Adrenal gland (tissue), 19 donors: ENCODE measurements at regions of chr19 and their contacts with region 1.

Region 1: DNA sequence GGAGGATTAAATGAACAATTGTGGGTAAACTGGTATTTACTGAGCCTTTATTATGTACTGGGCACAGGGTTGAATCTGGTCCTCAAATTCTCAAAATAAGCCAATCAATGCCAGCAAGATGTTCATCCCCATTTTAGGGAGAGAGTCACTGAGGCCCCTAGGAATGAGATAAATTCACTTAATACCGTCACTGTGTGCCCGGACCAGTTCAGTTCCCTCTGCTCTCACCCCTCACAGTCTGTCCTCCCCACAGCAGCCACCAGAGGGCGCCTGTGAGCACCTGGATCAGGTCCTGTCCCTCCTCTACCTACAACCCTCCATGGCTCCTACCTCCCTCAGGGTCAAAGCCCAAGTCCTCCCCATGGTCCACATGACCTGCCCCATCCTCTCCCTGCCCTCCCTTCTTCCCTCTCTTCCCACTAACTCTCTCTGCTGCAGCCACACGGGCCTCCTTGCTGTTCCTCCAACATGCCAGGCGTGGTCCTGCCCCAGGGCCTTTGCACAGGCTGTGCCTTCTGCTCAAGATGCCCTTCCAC is 42.0 kb upstream of the NFIC start:
- DNase-seq: peak; percentile 50 to 85 (median 67)
- H3K4me3 ChIP-seq: no peak overlapping the region
- H3K27ac ChIP-seq: no peak overlapping the region
- H3K4me1 ChIP-seq: no peaks in the 10 kb centered on the region
- H3K27me3 ChIP-seq: no peaks in the 10 kb centered on the region
- CTCF ChIP-seq: peak; percentile 55 to 78 (median 67)
- POLR2A ChIP-seq: no peak

Region 2: GRCh38 chr19:3360421-3361383 is 36.3 kb after region 1 on chr19:
- intact Hi-C with region 1: no loop called
- DNase-seq: peak; percentile 66 to 84 (median 76)
- H3K4me3 ChIP-seq: peak overlapping the region in 3 of 4 donors; percentile 53 to 99 (median 65)
- H3K27ac ChIP-seq: peak overlapping the region; percentile 50 to 99 (median 87)
- H3K4me1 ChIP-seq: peaks cover 28 to 44% of the 10 kb centered on the region in 2 donors
- H3K27me3 ChIP-seq: no peaks in the 10 kb centered on the region
- CTCF ChIP-seq: peak in 2 of 6 experiments; percentile 6 to 13
- POLR2A ChIP-seq: peak; percentile 11 to 59

Region 3: DNA sequence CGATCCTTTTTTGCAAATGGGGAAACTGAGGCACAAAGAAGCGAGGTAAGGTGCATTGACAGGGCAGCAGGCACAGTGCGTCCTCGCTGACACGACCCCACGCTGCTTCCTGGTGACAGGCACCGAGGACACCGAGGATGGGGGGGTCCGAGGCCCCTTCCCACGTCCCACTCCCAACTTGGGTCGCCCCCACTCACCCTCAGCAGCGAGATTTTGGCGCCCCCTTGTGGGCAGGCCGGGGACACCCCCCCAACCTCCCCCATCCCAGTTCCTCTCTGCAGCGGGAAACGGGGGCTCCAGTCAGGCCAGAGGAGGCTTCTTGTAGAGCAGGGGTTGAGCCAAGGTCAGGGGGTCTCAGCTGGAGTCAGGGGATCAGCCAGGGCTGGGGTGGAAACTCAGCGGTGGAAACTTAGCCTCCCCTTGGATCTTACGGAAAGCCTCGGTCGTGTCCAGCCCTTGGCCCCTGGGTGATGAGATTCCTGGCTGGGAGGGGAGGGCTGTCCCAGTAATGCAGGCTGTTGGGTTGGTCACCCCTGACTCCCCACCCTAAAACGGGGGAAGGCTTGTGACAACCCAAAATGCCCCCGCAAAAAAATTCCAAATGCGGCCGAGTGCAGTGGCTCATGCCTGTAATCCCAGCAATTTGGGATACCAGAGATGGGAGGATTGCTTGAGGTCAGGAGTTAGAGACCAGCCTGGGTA is 147.7 kb after region 1 on chr19:
- intact Hi-C with region 1: loop called (anchors 2 to 5 kb)
- DNase-seq: peak in 2 of 7 donors; percentile 60 to 62
- H3K4me3 ChIP-seq: no peak overlapping the region
- H3K27ac ChIP-seq: no peak overlapping the region
- H3K4me1 ChIP-seq: peaks cover 0 to 7% of the 10 kb centered on the region in 2 donors
- H3K27me3 ChIP-seq: no peaks in the 10 kb centered on the region
- CTCF ChIP-seq: peak; percentile 73 to 87 (median 80)
- POLR2A ChIP-seq: no peak

Region 4: DNA sequence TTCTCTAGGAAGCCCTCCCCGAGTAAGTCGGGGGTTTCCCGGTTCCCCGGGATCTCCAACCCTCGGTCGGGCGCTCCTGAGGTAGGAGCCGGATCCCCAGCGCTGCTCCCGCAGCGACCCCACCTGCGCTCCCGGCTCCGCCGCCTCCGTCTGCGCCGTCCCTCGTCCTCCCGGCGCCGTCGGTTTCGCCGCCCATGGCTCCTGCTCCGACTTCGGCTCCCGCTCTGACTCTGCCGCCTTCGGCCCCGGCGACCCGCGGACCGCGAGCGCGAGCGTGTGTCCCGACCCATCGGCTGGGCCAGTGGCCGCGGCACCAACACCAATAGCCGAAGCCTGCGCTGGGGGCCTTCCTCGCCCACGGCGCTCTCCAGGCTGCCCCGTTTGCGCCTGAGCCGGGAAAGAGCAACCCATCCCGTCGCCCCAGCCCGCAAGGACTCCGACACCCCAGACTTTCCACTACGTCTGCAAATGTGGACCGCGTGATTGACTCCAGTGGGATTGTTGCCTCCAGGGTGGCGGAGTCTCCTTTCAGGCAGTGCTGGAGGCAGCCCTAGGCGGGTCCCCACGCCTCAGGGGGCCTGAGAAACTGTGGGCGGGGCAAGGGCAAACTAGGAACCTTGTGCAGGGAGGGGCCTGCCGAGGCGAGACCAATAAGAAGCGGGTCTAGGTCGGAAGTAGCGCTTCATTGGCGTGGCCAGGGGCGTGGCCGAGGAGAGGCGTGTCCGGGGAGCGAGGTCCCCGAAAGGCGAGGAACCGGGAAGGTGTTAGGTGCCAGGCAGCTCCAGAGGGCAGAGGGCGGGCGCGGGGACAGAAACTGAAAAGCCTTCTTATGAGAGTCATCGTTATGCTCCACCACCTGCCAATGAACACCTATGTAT is 302.3 kb after region 1 on chr19 and contains the start of gene CACTIN:
- intact Hi-C with region 1: loop called in 1 of 2 experiments (anchors 10 kb)
- DNase-seq: peak; percentile 98 to 99 (median 99)
- H3K4me3 ChIP-seq: peak within 1 kb of the TSS; percentile 68 to 96 (median 82)
- H3K27ac ChIP-seq: peak within 1 kb of the TSS; percentile 78 to 96 (median 91)
- H3K4me1 ChIP-seq: peaks cover 6 to 22% of the 10 kb centered on the region in 2 donors
- H3K27me3 ChIP-seq: no peaks in the 10 kb centered on the region
- CTCF ChIP-seq: no peak
- POLR2A ChIP-seq: peak; percentile 66 to 80
- total RNA-seq, gene CACTIN: 13.3 to 78.4 (median 22.8) TPM